GM13976 (cell line): ENCODE measurements at regions of chr4 and their contacts with region 1.

Region 1: GRCh38 chr4:38062088-38062893 is 102.1 kb downstream of the PTTG2 start:
- DNase-seq: peak; percentile 73
- CTCF ChIP-seq: peak; percentile 65

Region 2: GRCh38 chr4:38730830-38731646 is 668.7 kb after region 1 on chr4:
- in situ Hi-C with region 1: loop called (anchors 10 kb)
- DNase-seq: peak; percentile 80
- CTCF ChIP-seq: peak; percentile 78